ENCODE measurements at regions of chr2 and their contacts with region 1.

Region 1: DNA sequence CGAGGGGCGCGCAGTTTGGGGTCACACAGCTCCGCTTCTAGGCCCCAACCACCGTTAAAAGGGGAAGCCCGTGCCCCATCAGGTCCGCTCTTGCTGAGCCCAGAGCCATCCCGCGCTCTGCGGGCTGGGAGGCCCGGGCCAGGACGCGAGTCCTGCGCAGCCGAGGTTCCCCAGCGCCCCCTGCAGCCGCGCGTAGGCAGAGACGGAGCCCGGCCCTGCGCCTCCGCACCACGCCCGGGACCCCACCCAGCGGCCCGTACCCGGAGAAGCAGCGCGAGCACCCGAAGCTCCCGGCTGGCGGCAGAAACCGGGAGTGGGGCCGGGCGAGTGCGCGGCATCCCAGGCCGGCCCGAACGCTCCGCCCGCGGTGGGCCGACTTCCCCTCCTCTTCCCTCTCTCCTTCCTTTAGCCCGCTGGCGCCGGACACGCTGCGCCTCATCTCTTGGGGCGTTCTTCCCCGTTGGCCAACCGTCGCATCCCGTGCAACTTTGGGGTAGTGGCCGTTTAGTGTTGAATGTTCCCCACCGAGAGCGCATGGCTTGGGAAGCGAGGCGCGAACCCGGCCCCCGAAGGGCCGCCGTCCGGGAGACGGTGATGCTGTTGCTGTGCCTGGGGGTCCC is at the start of gene ITGA4:
- DNase-seq: peak; percentile 75
- H3K4me3 ChIP-seq: peak within 1 kb of the TSS; percentile 57 to 74 (median 70)
- H3K27ac ChIP-seq: no peak within 1 kb of the TSS
- H3K4me1 ChIP-seq: peaks cover 17% of the 10 kb centered on the region
- H3K27me3 ChIP-seq: no peaks in the 10 kb centered on the region
- CTCF ChIP-seq: peak; percentile 56 to 78
- total RNA-seq, gene ITGA4: 24.9 to 59.7 TPM

Region 2: DNA sequence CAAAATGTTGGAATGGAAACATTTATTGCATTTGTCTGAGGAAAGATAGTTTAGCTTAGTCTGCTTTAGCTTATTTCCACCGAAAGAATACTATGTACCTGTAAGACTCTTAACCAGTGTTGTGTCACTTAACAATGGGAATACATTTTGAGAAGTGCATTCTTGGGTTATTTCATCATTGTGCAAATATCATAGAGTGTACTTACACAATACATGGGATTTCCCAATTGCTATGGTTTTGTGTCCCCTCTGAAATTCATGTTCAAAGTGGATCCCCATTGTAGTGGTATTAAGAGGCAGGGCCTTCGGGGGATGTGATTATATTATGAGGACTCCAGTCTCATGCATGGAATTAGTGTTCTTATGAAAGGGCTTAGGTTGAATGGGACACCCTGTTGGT is 726.3 kb before region 1 on chr2:
- CTCF ChIA-PET with region 1: no interaction called
- dilution Hi-C with region 1: no loop called
- in situ Hi-C with region 1: no loop called
- intact Hi-C with region 1: loop called (anchors 5 kb)
- DNase-seq: peak; percentile 70
- H3K4me3 ChIP-seq: no peak overlapping the region
- H3K27ac ChIP-seq: no peak overlapping the region
- H3K4me1 ChIP-seq: peaks cover 22% of the 10 kb centered on the region
- H3K27me3 ChIP-seq: no peaks in the 10 kb centered on the region
- CTCF ChIP-seq: no peak

Region 3: GRCh38 chr2:181077128-181077709 is 380.0 kb before region 1 on chr2:
- CTCF ChIA-PET with region 1: no interaction called
- dilution Hi-C with region 1: loop called (anchors 25 kb)
- in situ Hi-C with region 1: no loop called
- intact Hi-C with region 1: loop called (anchors 5 kb)
- DNase-seq: peak; percentile 52
- H3K4me3 ChIP-seq: no peak overlapping the region
- H3K27ac ChIP-seq: no peak overlapping the region
- H3K4me1 ChIP-seq: peaks cover 23% of the 10 kb centered on the region
- H3K27me3 ChIP-seq: no peaks in the 10 kb centered on the region
- CTCF ChIP-seq: peak; percentile 65 to 71

Region 4: DNA sequence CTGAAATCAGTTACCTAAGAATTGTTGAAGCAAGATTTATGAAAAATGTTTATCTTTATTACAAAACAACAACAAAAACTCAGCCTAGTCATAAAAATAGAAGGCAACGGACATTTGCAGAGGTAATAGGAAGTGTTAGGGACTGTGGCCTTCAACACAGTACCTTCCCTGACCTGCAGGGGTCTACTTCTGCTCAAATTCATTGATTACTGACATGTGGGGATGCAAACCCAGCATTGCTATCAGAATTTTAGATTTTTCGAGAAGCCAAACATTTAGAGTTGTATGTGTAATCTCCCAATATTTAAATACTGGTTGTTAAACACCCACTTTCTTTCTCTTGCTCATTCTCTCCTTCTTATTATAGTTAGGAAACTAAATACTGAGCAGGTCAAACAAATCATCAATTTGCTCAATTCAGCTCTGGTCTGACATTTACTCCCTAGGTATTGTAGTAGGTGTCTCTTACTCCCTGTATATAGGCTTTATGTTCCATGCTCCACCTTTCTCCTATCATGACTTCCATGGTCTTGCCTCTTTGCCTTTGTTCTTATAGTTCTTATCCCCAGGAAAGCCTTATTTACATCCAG is 278.3 kb before region 1 on chr2:
- CTCF ChIA-PET with region 1: no interaction called
- dilution Hi-C with region 1: no loop called
- in situ Hi-C with region 1: no loop called
- intact Hi-C with region 1: loop called (anchors 5 kb)
- DNase-seq: no peak
- H3K4me3 ChIP-seq: no peak overlapping the region
- H3K27ac ChIP-seq: no peak overlapping the region
- H3K4me1 ChIP-seq: no peaks in the 10 kb centered on the region
- H3K27me3 ChIP-seq: no peaks in the 10 kb centered on the region
- CTCF ChIP-seq: peak; percentile 45 to 57

Measured in mammary epithelial cell (primary cell).